Mammary epithelial cell (primary cell): ENCODE measurements at regions of chr9 and their contacts with region 1.

Region 1: GRCh38 chr9:115591584-115591984 is 473.6 kb upstream of the TNC start:
- DNase-seq: peak; percentile 95
- H3K4me3 ChIP-seq: no peak overlapping the region
- H3K27ac ChIP-seq: peak overlapping the region; percentile 37
- H3K4me1 ChIP-seq: peaks cover 36% of the 10 kb centered on the region
- H3K27me3 ChIP-seq: no peaks in the 10 kb centered on the region
- CTCF ChIP-seq: peak; percentile 93 to 94

Region 2: GRCh38 chr9:115643948-115644727 is 52.6 kb after region 1 on chr9:
- CTCF ChIA-PET with region 1: no interaction called
- dilution Hi-C with region 1: no loop called
- in situ Hi-C with region 1: no loop called
- intact Hi-C with region 1: loop called (anchors 2 kb)
- DNase-seq: peak; percentile 26
- H3K4me3 ChIP-seq: no peak overlapping the region
- H3K27ac ChIP-seq: peak overlapping the region; percentile 29
- H3K4me1 ChIP-seq: peaks cover 39% of the 10 kb centered on the region
- H3K27me3 ChIP-seq: no peaks in the 10 kb centered on the region
- CTCF ChIP-seq: no peak

Region 3: DNA sequence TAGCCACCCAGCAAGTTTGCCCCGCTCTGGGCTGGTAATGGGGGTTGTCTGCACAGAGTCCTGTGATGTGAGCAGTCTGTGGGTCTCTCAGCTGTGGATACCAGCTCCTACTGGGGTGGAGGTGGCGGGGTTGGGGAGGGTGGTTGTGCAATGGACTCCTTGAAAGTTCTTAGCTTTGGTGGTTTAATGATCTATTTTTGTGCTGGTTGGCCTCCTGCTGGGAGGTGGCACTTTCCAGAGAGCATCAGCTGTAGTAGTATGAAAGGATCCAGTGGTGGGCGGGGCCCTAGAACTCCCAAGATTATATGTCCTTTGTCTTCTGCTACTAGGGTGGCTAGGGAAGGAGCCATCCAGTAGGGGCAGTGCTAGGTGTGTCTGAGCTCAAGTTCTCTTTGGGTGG is 286.3 kb after region 1 on chr9:
- CTCF ChIA-PET with region 1: no interaction called
- dilution Hi-C with region 1: no loop called
- in situ Hi-C with region 1: loop called (anchors 10 kb)
- intact Hi-C with region 1: loop called (anchors 1 kb)
- DNase-seq: no peak
- H3K4me3 ChIP-seq: no peak overlapping the region
- H3K27ac ChIP-seq: no peak overlapping the region
- H3K4me1 ChIP-seq: no peaks in the 10 kb centered on the region
- H3K27me3 ChIP-seq: no peaks in the 10 kb centered on the region
- CTCF ChIP-seq: no peak

Region 4: DNA sequence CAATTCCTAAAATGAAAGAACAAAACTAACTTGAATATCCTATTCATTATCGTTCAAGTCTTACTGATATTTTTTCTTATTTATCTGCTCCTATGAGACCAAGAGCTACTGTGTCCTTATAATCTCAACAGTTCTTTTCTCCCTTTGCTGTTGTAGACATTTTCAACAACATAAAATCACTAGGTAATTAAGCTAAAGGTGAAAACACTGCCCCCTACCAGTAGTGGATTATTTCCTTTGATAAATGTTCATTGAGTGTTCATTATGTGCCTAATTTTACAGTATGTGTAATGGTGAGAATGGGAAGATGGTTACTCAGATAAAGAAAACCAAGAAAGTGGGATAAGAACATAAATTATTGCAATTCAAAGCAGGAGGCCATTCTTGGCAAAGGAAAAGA is 520.7 kb after region 1 on chr9:
- CTCF ChIA-PET with region 1: no interaction called
- dilution Hi-C with region 1: no loop called
- in situ Hi-C with region 1: no loop called
- intact Hi-C with region 1: loop called (anchors 2 kb)
- DNase-seq: peak; percentile 25
- H3K4me3 ChIP-seq: no peak overlapping the region
- H3K27ac ChIP-seq: no peak overlapping the region
- H3K4me1 ChIP-seq: no peaks in the 10 kb centered on the region
- H3K27me3 ChIP-seq: no peaks in the 10 kb centered on the region
- CTCF ChIP-seq: peak; percentile 49 to 57

Region 5: DNA sequence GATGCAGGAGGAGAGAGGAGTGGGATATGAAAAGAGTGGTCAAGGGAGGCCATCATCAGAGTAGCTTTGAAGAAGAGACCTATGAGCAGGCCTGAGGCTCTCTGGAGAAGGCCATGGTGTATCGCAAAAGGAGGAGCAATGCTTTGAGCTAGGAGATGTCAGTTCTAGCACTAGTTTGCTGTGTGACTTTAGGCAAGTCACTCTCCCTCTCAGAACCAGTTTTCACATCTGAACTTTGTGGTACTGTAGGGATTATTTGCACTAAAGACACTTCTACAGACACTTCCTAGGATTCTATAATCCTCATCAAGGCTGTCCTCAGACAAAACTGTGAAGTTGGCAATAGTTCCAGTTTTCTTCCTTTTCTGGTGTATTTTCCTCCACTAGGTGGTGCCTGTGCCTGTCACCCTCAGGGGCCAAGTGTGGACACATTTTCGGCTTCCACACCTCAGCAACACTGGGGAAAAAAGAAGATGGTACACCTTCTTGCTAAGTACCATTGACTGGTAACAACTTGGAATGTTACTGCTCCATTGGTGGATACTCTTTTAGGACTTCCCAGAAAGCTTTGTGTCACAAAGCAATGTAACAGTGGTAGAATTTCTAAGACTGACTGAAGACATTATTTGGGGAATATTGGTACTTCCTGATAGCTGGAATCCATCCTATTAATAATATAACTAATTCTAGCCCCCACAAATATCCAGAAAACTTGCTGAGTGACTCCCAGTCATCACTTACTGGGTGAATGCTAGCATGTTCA is 571.9 kb after region 1 on chr9:
- CTCF ChIA-PET with region 1: no interaction called
- dilution Hi-C with region 1: no loop called
- in situ Hi-C with region 1: loop called in 1 of 2 experiments (anchors 25 kb)
- intact Hi-C with region 1: loop called (anchors 1 kb)
- DNase-seq: no peak
- H3K4me3 ChIP-seq: no peak overlapping the region
- H3K27ac ChIP-seq: no peak overlapping the region
- H3K4me1 ChIP-seq: no peaks in the 10 kb centered on the region
- H3K27me3 ChIP-seq: no peaks in the 10 kb centered on the region
- CTCF ChIP-seq: peak; percentile 52

Region 6: DNA sequence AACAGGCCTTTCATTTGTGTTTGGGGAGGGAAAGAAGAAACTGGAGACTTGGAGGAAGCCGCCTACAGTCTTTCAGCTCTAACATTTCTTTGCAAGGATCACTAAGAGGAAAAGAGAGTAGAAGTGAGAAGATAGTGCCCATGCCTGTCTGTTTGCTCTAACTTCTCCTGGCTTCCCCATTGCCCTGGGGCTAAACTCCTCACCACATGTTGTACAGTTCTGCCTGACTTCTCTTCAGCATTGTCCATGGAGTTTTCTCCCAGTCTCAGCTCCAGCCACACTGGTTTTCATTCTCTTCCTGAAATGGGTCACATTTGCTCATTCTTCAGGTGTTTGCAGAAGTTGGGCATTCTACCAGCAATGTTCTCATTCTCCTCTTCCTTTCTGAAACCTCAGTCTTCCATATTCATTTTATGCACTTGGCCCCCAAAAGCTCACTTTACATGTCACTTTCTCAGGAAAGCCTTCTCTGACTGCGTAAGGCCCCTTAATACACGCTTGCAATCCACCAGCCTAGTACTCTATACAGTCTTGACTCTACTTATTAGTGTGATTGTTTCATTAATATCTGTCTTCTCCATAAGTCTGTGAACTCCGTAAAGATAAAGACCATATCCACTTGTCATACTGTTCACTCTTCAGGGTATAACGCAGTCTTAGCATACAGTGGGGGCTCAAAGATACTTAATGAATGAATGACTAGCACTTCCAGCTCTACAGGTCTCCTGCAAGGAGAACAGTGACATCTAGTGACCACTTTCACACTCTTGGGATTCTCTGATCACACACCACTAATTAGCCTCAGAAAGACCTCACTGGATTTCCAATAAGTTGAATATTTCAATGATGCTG is 1055.3 kb after region 1 on chr9:
- CTCF ChIA-PET with region 1: no interaction called
- dilution Hi-C with region 1: no loop called
- in situ Hi-C with region 1: loop called in 1 of 2 experiments (anchors 10 kb)
- intact Hi-C with region 1: loop called (anchors 1 kb)
- DNase-seq: peak; percentile 28
- H3K4me3 ChIP-seq: no peak overlapping the region
- H3K27ac ChIP-seq: no peak overlapping the region
- H3K4me1 ChIP-seq: no peaks in the 10 kb centered on the region
- H3K27me3 ChIP-seq: no peaks in the 10 kb centered on the region
- CTCF ChIP-seq: peak; percentile 69 to 81

Region 7: DNA sequence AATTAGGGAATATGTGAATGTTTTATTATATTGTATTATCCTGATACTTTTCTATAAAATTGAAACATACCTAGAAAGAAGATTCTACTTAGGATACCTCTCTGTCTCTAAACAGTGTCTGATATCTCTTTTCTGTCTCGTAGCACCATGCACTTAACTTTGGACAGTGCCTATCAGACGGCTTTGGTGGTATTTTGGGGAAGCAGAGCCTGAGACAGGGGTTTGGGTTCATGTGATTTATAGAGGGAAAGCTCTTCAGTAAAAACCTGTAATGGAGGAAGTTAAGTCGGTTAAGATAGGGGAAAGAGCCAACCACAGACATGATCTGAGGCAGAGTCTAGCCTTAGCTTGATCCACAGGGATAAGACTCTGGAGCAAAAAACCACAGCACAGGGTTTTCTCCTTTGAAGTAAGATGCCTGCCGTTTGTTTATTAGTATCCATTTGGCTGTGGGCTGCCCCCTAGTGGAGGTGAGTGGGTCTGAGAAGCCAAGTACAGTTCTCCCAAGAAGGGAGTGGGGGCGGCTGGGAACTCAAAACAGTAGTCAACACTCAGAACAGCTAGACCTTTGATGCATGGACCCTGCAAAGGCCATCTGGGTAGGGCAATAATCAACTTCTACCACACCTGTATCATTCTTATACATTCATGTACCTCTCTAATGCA is 1964.5 kb after region 1 on chr9:
- CTCF ChIA-PET with region 1: no interaction called
- dilution Hi-C with region 1: no loop called
- in situ Hi-C with region 1: no loop called
- intact Hi-C with region 1: loop called (anchors 5 kb)
- DNase-seq: peak; percentile 40
- H3K4me3 ChIP-seq: no peak overlapping the region
- H3K27ac ChIP-seq: no peak overlapping the region
- H3K4me1 ChIP-seq: no peaks in the 10 kb centered on the region
- H3K27me3 ChIP-seq: no peaks in the 10 kb centered on the region
- CTCF ChIP-seq: peak; percentile 77 to 79